ENCODE measurements at regions of chr3 and their contacts with region 1.

Region 1: GRCh38 chr3:73502609-73503583 is 121.8 kb downstream of the PDZRN3 start:
- DNase-seq: peak; percentile 75
- ATAC-seq: peak; percentile 67
- H3K4me3 Mint-ChIP-seq: no peak overlapping the region
- H3K27ac Mint-ChIP-seq: no peak overlapping the region
- H3K4me1 Mint-ChIP-seq: no peaks in the 10 kb centered on the region
- H3K27me3 Mint-ChIP-seq: peaks cover 13% of the 10 kb centered on the region
- CTCF ChIP-seq: peak; percentile 79

Region 2: GRCh38 chr3:73094125-73094524 is 408.8 kb before region 1 on chr3:
- CTCF ChIA-PET with region 1: interaction called, 15 read pairs
- POLR2A ChIA-PET with region 1: no interaction called
- intact Hi-C with region 1: no loop called
- DNase-seq: no peak
- ATAC-seq: peak; percentile 55
- H3K4me3 Mint-ChIP-seq: no peak overlapping the region
- H3K27ac Mint-ChIP-seq: no peak overlapping the region
- H3K4me1 Mint-ChIP-seq: peaks cover 8% of the 10 kb centered on the region
- H3K27me3 Mint-ChIP-seq: no peaks in the 10 kb centered on the region
- CTCF ChIP-seq: no peak

Region 3: GRCh38 chr3:73401616-73402290 is 101.1 kb before region 1 on chr3:
- CTCF ChIA-PET with region 1: no interaction called
- POLR2A ChIA-PET with region 1: no interaction called
- intact Hi-C with region 1: no loop called
- DNase-seq: no peak
- ATAC-seq: no peak
- H3K4me3 Mint-ChIP-seq: no peak overlapping the region
- H3K27ac Mint-ChIP-seq: no peak overlapping the region
- H3K4me1 Mint-ChIP-seq: no peaks in the 10 kb centered on the region
- H3K27me3 Mint-ChIP-seq: no peaks in the 10 kb centered on the region
- CTCF ChIP-seq: no peak

Measured in activated CD8-positive, alpha-beta T cell treated with anti-CD3 and anti-CD28 coated beads for 36 hours (primary cell).